Calu3 (cell line): ENCODE measurements at regions of chr22 and their contacts with region 1.

Region 1: DNA sequence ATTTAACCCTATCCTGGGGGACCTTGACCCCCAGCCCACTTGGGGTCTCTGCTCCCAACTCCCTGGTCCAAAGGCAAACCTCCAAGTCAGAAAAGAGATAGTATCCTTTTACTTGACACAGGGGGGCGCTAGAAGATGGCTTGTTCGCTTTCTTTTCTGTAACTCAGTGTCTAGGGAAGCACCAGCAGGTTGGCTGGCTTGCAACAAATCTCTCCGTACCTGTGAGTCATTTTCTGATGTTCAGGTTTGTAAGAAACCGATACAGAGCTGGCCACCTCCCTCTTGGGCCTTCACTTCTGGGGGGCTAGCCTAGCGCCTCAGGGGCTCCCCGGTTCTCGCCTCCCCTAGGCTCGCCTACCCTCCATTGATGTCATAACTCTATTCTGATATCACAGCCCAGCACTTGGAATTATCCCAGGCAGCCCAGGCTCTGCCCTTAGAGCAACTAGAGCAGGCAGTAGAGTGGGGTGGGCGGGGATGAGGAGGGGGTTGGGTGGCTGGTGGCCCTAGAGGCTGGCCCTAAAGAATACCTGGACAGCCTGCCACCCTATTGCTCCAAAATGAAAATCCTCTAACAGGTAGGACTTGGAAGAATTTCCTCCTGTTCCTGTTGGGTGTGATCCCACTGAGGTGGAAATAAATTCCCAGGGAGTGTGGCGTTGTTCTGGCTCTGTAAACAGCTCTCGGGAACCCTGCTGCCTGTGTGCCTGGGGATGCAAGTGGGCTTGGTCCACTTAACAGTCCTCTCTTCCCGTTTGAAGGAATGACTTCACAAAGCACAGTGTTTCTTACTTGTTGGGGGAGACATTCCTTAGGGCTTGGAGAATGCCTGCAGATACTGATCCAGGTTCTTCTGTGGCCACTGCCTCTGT is 69.4 kb downstream of the OSBP2 start:
- DNase-seq: peak; percentile 74
- H3K4me3 Mint-ChIP-seq: no peak overlapping the region
- H3K27ac Mint-ChIP-seq: no peak overlapping the region
- H3K4me1 Mint-ChIP-seq: peaks cover 8% of the 10 kb centered on the region
- H3K27me3 Mint-ChIP-seq: no peaks in the 10 kb centered on the region
- CTCF ChIP-seq: peak; percentile 79

Region 2: GRCh38 chr22:30890686-30891442 is 126.8 kb after region 1 on chr22:
- CTCF ChIA-PET with region 1: interaction called, 11 read pairs
- intact Hi-C with region 1: loop called (anchors 5 kb)
- DNase-seq: peak; percentile 70
- H3K4me3 Mint-ChIP-seq: no peak overlapping the region
- H3K27ac Mint-ChIP-seq: no peak overlapping the region
- H3K4me1 Mint-ChIP-seq: no peaks in the 10 kb centered on the region
- H3K27me3 Mint-ChIP-seq: no peaks in the 10 kb centered on the region
- CTCF ChIP-seq: peak; percentile 87

Region 3: GRCh38 chr22:30920407-30920806 is 156.4 kb after region 1 on chr22:
- CTCF ChIA-PET with region 1: interaction called, 21 read pairs
- intact Hi-C with region 1: loop called (anchors 1 kb)
- DNase-seq: peak; percentile 84
- H3K4me3 Mint-ChIP-seq: no peak overlapping the region
- H3K27ac Mint-ChIP-seq: no peak overlapping the region
- H3K4me1 Mint-ChIP-seq: no peaks in the 10 kb centered on the region
- H3K27me3 Mint-ChIP-seq: no peaks in the 10 kb centered on the region
- CTCF ChIP-seq: peak; percentile 90

Region 4: GRCh38 chr22:31075961-31076360 is 311.9 kb after region 1 on chr22:
- CTCF ChIA-PET with region 1: no interaction called
- intact Hi-C with region 1: no loop called
- DNase-seq: no peak
- H3K4me3 Mint-ChIP-seq: no peak overlapping the region
- H3K27ac Mint-ChIP-seq: no peak overlapping the region
- H3K4me1 Mint-ChIP-seq: no peaks in the 10 kb centered on the region
- H3K27me3 Mint-ChIP-seq: no peaks in the 10 kb centered on the region
- CTCF ChIP-seq: no peak